OCI-LY7 (cell line): ENCODE measurements at regions of chr10 and their contacts with region 1.

Region 1: GRCh38 chr10:102420810-102421644 is at the start of gene FBXL15:
- DNase-seq: peak; percentile 99
- H3K4me3 ChIP-seq: peak within 1 kb of the TSS; percentile 79
- H3K27ac ChIP-seq: peak within 1 kb of the TSS; percentile 82
- H3K4me1 ChIP-seq: peaks cover 46% of the 10 kb centered on the region
- CTCF ChIP-seq: no peak
- total RNA-seq, gene FBXL15: 13.3 and 20.9 TPM in 2 replicates

Region 2: DNA sequence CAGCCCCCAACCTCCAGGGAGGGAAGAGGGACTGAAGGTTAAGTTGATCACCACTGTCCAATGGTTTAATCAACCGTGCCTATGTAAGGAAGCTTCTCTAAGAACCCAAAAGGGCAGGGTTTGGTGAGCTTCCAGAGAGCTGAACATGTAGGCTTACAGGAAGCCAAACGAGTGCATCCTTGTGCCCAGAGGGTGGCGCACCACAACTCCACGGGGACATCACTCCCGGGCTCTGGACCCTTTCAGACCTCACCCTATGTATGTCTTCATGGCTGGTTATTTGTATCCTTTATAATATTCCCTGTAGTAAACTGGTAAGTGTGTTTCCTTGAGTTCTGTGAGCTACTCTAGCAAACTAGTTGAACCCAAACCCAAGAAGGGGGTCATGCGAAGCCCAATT is 37.0 kb before region 1 on chr10:
- CTCF ChIA-PET with region 1: no interaction called
- POLR2A ChIA-PET with region 1: no interaction called
- intact Hi-C with region 1: no loop called
- DNase-seq: no peak
- H3K4me3 ChIP-seq: no peak overlapping the region
- H3K27ac ChIP-seq: no peak overlapping the region
- H3K4me1 ChIP-seq: peaks cover 12% of the 10 kb centered on the region
- CTCF ChIP-seq: peak; percentile 57

Region 3: GRCh38 chr10:102394079-102394800 is 26.8 kb before region 1 on chr10:
- CTCF ChIA-PET with region 1: interaction called, 3 read pairs
- POLR2A ChIA-PET with region 1: interaction called, 11 read pairs
- intact Hi-C with region 1: loop called (anchors 1 kb)
- DNase-seq: peak; percentile 96
- H3K4me3 ChIP-seq: peak overlapping the region; percentile 78
- H3K27ac ChIP-seq: peak overlapping the region; percentile 70
- H3K4me1 ChIP-seq: peaks cover 23% of the 10 kb centered on the region
- CTCF ChIP-seq: peak; percentile 95

Region 4: GRCh38 chr10:102432162-102432950 is 11.3 kb after region 1 on chr10 and contains the start of gene CUEDC2:
- CTCF ChIA-PET with region 1: interaction called, 5 read pairs
- POLR2A ChIA-PET with region 1: interaction called, 13 read pairs
- intact Hi-C with region 1: loop called (anchors 1 kb)
- DNase-seq: peak; percentile 98
- H3K4me3 ChIP-seq: peak within 1 kb of the TSS; percentile 88
- H3K27ac ChIP-seq: peak within 1 kb of the TSS; percentile 41
- H3K4me1 ChIP-seq: peaks cover 19% of the 10 kb centered on the region
- CTCF ChIP-seq: peak; percentile 37; the same call in 1 of the 2 replicates
- total RNA-seq, gene CUEDC2: 48.9 and 61.0 TPM in 2 replicates

Region 5: GRCh38 chr10:102479651-102480050 is 58.6 kb after region 1 on chr10:
- CTCF ChIA-PET with region 1: no interaction called
- POLR2A ChIA-PET with region 1: interaction called, 3 read pairs
- intact Hi-C with region 1: loop called (anchors 2 kb)
- DNase-seq: no peak
- H3K4me3 ChIP-seq: no peak overlapping the region
- H3K27ac ChIP-seq: no peak overlapping the region
- H3K4me1 ChIP-seq: peaks cover 3% of the 10 kb centered on the region
- CTCF ChIP-seq: no peak

Region 6: GRCh38 chr10:102583435-102584417 is 162.7 kb after region 1 on chr10:
- CTCF ChIA-PET with region 1: no interaction called
- POLR2A ChIA-PET with region 1: no interaction called
- intact Hi-C with region 1: loop called (anchors 5 kb)
- DNase-seq: peak; percentile 90
- H3K4me3 ChIP-seq: no peak overlapping the region
- H3K27ac ChIP-seq: no peak overlapping the region
- H3K4me1 ChIP-seq: no peaks in the 10 kb centered on the region
- CTCF ChIP-seq: peak; percentile 87